Activated CD8-positive, alpha-beta T cell treated with anti-CD3 and anti-CD28 coated beads for 36 hours (primary cell): ENCODE measurements at regions of chr16 and their contacts with region 1.

Region 1: GRCh38 chr16:71883849-71884638 is at the start of gene ZNF821:
- DNase-seq: peak; percentile 78
- ATAC-seq: peak; percentile 54
- H3K4me3 Mint-ChIP-seq: peak within 1 kb of the TSS; percentile 92
- H3K27ac Mint-ChIP-seq: peak within 1 kb of the TSS; percentile 90
- H3K4me1 Mint-ChIP-seq: peaks cover 47% of the 10 kb centered on the region
- H3K27me3 Mint-ChIP-seq: peaks cover 7% of the 10 kb centered on the region
- CTCF ChIP-seq: peak; percentile 27
- total RNA-seq, gene ZNF821: 5.6 to 6.2 TPM

Region 2: DNA sequence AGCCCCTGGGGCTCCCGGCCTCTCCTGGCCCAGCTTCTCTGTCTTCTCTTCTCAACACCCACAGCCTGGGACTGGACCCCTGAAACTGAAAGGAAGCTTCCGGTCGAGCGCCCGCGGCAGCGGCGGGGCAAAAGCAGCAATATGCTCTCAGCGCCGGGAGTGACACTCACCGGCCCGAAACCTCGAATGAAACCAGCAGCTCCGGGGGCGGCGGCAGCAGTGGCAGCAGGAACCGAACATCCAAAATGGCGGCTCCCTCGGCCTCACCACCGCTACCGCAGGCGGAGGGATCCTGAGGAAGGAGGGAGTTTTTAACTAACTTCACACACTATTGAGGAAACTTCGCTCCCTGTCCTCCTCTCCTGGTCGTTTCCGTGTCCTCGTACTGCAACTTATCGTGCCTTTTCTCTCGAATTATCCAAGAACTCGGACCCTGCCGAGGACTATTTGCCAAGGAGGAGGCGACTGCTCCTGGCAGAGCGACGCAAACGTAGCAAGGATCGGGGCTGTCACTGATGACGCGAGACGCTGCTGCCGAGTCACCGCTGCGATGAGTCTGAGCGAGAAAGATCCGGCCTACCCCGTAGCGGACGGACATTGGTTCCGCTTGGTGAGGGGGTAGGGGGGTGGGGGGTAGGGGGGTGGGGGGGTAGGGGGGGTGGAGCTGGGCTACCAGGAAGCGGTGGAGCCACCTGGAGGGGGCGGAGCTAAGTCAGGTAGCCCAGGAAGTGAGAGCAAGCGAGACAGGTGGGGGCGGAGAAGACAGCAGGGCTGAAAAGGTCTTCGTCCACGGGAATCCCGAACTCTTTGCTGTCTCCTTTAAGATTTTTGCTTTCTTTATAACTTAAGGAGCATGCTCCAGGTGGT is 75.2 kb before region 1 on chr16 and contains the start of gene AP1G1:
- CTCF ChIA-PET with region 1: interaction called, 32 read pairs
- POLR2A ChIA-PET with region 1: interaction called, 17 read pairs
- intact Hi-C with region 1: loop called (anchors 5 kb)
- DNase-seq: peak; percentile 95
- ATAC-seq: peak; percentile 94
- H3K4me3 Mint-ChIP-seq: peak within 1 kb of the TSS; percentile 99
- H3K27ac Mint-ChIP-seq: peak within 1 kb of the TSS; percentile 100
- H3K4me1 Mint-ChIP-seq: peaks cover 18% of the 10 kb centered on the region
- H3K27me3 Mint-ChIP-seq: no peaks in the 10 kb centered on the region
- CTCF ChIP-seq: no peak
- total RNA-seq, gene AP1G1: 53.9 to 57.4 TPM

Region 3: GRCh38 chr16:71845639-71846430 is 38.2 kb before region 1 on chr16 and contains the start of gene ATXN1L:
- CTCF ChIA-PET with region 1: interaction called, 25 read pairs
- POLR2A ChIA-PET with region 1: interaction called, 11 read pairs
- intact Hi-C with region 1: loop called (anchors 5 kb)
- DNase-seq: peak; percentile 92
- ATAC-seq: peak; percentile 92
- H3K4me3 Mint-ChIP-seq: peak within 1 kb of the TSS; percentile 89
- H3K27ac Mint-ChIP-seq: peak within 1 kb of the TSS; percentile 93
- H3K4me1 Mint-ChIP-seq: peaks cover 36% of the 10 kb centered on the region
- H3K27me3 Mint-ChIP-seq: no peaks in the 10 kb centered on the region
- CTCF ChIP-seq: no peak
- total RNA-seq, gene ATXN1L: 13.6 to 14.9 TPM

Region 4: GRCh38 chr16:71853413-71853812 is 30.6 kb before region 1 on chr16:
- CTCF ChIA-PET with region 1: interaction called, 29 read pairs
- POLR2A ChIA-PET with region 1: interaction called, 7 read pairs
- intact Hi-C with region 1: loop called (anchors 5 kb)
- DNase-seq: no peak
- ATAC-seq: no peak
- H3K4me3 Mint-ChIP-seq: no peak overlapping the region
- H3K27ac Mint-ChIP-seq: peak overlapping the region; percentile 8
- H3K4me1 Mint-ChIP-seq: peaks cover 51% of the 10 kb centered on the region
- H3K27me3 Mint-ChIP-seq: no peaks in the 10 kb centered on the region
- CTCF ChIP-seq: no peak

Region 5: GRCh38 chr16:71869089-71869488 is 15.0 kb before region 1 on chr16:
- CTCF ChIA-PET with region 1: interaction called, 73 read pairs
- POLR2A ChIA-PET with region 1: interaction called, 6 read pairs
- intact Hi-C with region 1: no loop called
- DNase-seq: no peak
- ATAC-seq: no peak
- H3K4me3 Mint-ChIP-seq: no peak overlapping the region
- H3K27ac Mint-ChIP-seq: no peak overlapping the region
- H3K4me1 Mint-ChIP-seq: peaks cover 36% of the 10 kb centered on the region
- H3K27me3 Mint-ChIP-seq: no peaks in the 10 kb centered on the region
- CTCF ChIP-seq: no peak

Region 6: GRCh38 chr16:71894921-71895678 is 11.1 kb after region 1 on chr16 and contains the start of gene IST1:
- CTCF ChIA-PET with region 1: interaction called, 53 read pairs
- POLR2A ChIA-PET with region 1: interaction called, 33 read pairs
- intact Hi-C with region 1: no loop called
- DNase-seq: peak; percentile 99
- ATAC-seq: peak; percentile 94
- H3K4me3 Mint-ChIP-seq: peak within 1 kb of the TSS; percentile 99
- H3K27ac Mint-ChIP-seq: peak within 1 kb of the TSS; percentile 98
- H3K4me1 Mint-ChIP-seq: peaks cover 17% of the 10 kb centered on the region
- H3K27me3 Mint-ChIP-seq: no peaks in the 10 kb centered on the region
- CTCF ChIP-seq: no peak
- total RNA-seq, gene IST1: 157 to 175 TPM

Region 7: GRCh38 chr16:71903608-71904007 is 19.6 kb after region 1 on chr16:
- CTCF ChIA-PET with region 1: interaction called, 52 read pairs
- POLR2A ChIA-PET with region 1: interaction called, 7 read pairs
- intact Hi-C with region 1: no loop called
- DNase-seq: no peak
- ATAC-seq: no peak
- H3K4me3 Mint-ChIP-seq: no peak overlapping the region
- H3K27ac Mint-ChIP-seq: peak overlapping the region; percentile 60
- H3K4me1 Mint-ChIP-seq: peaks cover 62% of the 10 kb centered on the region
- H3K27me3 Mint-ChIP-seq: no peaks in the 10 kb centered on the region
- CTCF ChIP-seq: no peak

Region 8: DNA sequence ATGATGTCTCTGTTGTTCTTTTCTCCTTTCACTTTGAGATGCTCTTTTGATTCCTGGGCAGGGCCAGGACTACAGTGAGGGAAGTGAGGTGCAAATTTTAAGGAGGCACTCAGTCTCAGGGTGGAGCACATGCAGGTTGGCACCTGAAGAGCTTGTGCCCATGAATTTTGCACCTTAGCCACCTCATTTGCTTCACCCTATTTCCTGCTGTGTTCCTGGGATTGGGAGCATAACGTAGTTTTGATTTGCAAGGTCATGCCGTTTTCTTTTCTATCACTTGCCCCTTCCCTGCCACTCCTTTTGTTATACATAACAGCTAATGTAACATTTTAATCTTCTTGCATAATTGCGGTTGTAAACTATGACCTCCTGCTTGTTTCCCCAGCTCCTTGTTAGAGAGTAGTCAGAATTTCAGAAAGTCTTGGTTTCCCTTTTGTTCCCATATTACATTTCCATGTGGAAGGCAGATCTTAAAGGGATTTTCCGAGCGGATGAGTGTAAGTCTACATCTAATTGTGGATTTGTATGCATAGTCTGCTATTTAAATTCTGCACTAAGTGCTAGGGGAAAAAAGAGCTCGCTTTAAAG is 278.2 kb after region 1 on chr16:
- CTCF ChIA-PET with region 1: no interaction called
- POLR2A ChIA-PET with region 1: no interaction called
- intact Hi-C with region 1: no loop called
- DNase-seq: no peak
- ATAC-seq: no peak
- H3K4me3 Mint-ChIP-seq: no peak overlapping the region
- H3K27ac Mint-ChIP-seq: no peak overlapping the region
- H3K4me1 Mint-ChIP-seq: no peaks in the 10 kb centered on the region
- H3K27me3 Mint-ChIP-seq: no peaks in the 10 kb centered on the region
- CTCF ChIP-seq: no peak